ENCODE measurements at regions of chr15 and their contacts with region 1.

Region 1: GRCh38 chr15:74545880-74546656 is 5.0 kb downstream of the ARID3B start:
- DNase-seq: peak; percentile 88 to 97 (median 91)
- H3K4me3 ChIP-seq: peak overlapping the region in 1 of 3 experiments; percentile 41
- H3K4me3 Mint-ChIP-seq: peak overlapping the region; percentile 49 to 78
- H3K27ac ChIP-seq: no peak overlapping the region
- H3K27ac Mint-ChIP-seq: peak overlapping the region in 6 of 7 donors; percentile 24 to 83 (median 52)
- H3K4me1 ChIP-seq: peaks cover 40 to 56% of the 10 kb centered on the region in 2 donors
- H3K4me1 Mint-ChIP-seq: peaks cover 60% of the 10 kb centered on the region
- H3K27me3 ChIP-seq: no peaks in the 10 kb centered on the region
- H3K27me3 Mint-ChIP-seq: peaks cover 5 to 11% (median 8%) of the 10 kb centered on the region in 3 donors
- CTCF ChIP-seq: no peak

Region 2: DNA sequence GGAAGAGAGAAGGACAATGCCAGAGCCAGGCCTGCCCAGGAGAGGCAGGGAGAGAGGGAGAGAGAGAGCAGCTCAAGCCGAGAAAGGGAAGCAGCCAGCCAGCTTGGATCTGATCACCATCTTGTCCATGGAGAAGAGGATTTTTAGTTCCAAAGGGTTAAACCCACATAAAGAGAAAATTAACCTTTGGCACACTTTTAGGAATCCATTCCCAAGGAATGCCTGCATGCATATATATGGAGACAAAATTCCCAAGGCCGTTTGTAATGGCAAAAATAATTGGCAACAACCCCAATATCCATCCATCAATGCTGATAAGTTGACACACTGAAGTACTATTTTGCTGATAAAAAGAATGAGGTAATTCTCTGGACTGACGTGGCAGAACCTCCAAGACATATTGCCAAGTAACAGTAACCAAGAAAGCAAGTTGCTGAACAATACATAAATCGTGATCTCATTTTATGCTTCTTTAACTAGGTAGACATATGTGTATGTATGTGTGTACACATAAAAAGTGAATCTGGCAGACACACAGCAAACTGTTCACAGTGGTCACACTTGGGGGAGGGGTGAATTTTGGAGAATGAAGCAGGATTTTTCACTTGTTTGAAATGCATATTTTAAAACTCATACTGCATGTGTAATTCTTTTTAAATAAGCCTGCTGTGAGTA is 335.9 kb before region 1 on chr15:
- intact Hi-C with region 1: no loop called
- DNase-seq: no peak
- H3K4me3 ChIP-seq: no peak overlapping the region
- H3K4me3 Mint-ChIP-seq: no peak overlapping the region
- H3K27ac ChIP-seq: no peak overlapping the region
- H3K27ac Mint-ChIP-seq: no peak overlapping the region
- H3K4me1 ChIP-seq: no peaks in the 10 kb centered on the region
- H3K4me1 Mint-ChIP-seq: no peaks in the 10 kb centered on the region
- H3K27me3 ChIP-seq: no peaks in the 10 kb centered on the region
- H3K27me3 Mint-ChIP-seq: peaks cover 2 to 14% (median 7%) of the 10 kb centered on the region in 3 donors
- CTCF ChIP-seq: no peak

Region 3: DNA sequence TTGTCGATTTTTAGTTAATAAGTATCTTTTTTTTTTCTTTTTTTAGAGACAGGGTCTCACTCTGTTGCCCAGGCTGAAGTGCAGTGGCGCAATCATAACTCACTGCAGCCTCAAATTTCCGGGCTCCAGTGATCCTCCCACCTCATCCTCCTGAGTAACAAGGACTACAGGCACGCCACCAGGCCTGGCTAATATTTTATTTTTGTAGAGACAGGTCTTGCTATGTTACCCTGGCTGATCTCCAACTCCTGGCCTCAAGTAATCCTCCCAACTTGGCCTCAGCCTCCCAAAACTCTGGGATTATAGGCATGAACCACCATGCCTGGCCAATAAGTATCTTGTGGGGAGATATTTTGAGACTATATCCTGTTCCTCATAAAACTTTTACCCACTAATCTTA is 34.5 kb before region 1 on chr15:
- intact Hi-C with region 1: loop called in 1 of 2 experiments (anchors 5 kb)
- DNase-seq: peak; percentile 47 to 73 (median 71)
- H3K4me3 ChIP-seq: peak overlapping the region in 1 of 3 experiments; percentile 5
- H3K4me3 Mint-ChIP-seq: no peak overlapping the region
- H3K27ac ChIP-seq: peak overlapping the region; percentile 76 to 86
- H3K27ac Mint-ChIP-seq: peak overlapping the region; percentile 85 to 98 (median 94)
- H3K4me1 ChIP-seq: peaks cover 25 to 27% of the 10 kb centered on the region in 2 donors
- H3K4me1 Mint-ChIP-seq: peaks cover 26% of the 10 kb centered on the region
- H3K27me3 ChIP-seq: no peaks in the 10 kb centered on the region
- H3K27me3 Mint-ChIP-seq: peaks cover 0 to 2% (median 1%) of the 10 kb centered on the region in 3 donors
- CTCF ChIP-seq: no peak